Prostate gland (tissue), 2 donors: ENCODE measurements at regions of chr16 and their contacts with region 1.

Region 1: DNA sequence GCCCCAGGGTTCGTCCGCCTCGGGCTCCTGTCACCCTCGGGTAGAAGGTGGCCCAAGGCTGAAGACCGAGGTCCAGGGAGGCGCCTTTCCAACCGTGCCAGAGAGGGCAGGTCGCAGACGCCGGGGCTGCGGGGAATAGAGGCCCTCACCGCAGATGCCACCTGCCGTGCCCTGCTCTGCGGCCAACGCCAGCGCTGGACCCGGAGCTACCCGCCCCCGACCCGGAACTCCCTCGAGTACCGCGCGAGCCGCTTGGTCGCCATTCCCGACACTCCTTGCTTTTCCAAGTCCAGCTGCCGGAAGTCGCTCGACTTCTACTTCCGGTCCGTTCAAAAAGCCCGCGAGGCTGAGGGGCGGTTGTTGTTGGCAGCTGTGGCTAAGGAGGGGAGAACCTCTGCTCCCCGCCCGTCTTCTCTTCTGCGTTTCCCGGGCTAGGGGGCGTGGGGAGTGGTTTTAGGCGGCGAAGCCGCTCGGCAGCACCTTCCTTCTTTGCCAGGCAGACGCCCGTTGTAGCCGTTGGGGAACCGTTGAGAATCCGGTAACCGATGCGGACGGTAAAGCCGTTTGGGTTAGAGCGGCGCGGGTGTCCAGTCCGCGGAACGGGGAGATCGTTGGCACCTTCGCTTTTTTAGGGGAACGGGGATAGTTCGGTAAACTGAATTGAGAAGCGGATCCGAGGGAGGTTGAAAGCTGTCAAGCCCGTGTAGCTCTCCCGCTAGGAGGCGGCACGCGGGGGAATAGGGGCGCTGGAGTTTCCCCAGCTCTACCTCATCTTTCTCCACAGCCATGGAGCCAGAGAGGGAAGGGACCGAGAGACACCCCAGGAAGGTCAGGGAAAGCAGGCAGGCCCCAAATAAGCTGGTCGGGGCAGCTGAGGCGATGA is at the starts of genes ERI2 and REXO5:
- DNase-seq: peak; percentile 90
- H3K4me3 ChIP-seq: peak within 1 kb of the TSS; percentile 63 to 69
- H3K27ac ChIP-seq: peak within 1 kb of the TSS; percentile 95 to 96
- H3K4me1 ChIP-seq: peaks cover 9% of the 10 kb centered on the region
- H3K27me3 ChIP-seq: no peaks in the 10 kb centered on the region
- CTCF ChIP-seq: peak; percentile 34 to 43 (median 38)
- POLR2A ChIP-seq: peak; percentile 78
- total RNA-seq, gene ERI2: 31.6 to 35.2 TPM
- total RNA-seq, gene REXO5: 12.1 to 67.1 TPM

Region 2: DNA sequence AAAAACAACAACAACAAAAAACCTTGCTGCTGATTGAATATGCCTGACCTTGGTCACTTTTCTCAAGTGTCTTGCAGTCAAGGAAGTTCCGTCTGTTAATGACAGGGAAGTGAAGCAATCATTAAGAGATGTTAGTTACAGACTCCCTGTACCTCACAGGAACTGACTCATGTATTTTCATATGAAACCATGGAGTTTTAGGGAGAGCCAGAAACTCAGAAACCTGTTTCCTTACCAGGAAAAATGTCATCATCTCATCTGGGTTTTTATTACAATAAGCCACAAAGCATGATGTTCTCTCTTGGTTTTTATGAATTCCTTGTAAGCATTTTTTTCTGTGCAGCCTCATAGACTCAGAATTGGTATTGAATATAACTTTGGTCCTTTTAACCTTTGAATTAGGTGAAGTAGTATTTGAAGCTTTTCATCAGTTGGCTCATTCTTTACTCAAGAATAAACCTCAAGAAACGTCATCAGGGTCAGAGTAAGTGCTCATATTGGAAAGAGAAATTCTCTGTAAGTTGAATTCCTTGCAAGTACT is 104.4 kb after region 1 on chr16:
- intact Hi-C with region 1: loop called (anchors 10 kb)
- DNase-seq: no peak
- H3K4me3 ChIP-seq: no peak overlapping the region
- H3K27ac ChIP-seq: no peak overlapping the region
- H3K4me1 ChIP-seq: peaks cover 6% of the 10 kb centered on the region
- H3K27me3 ChIP-seq: no peaks in the 10 kb centered on the region
- CTCF ChIP-seq: no peak
- POLR2A ChIP-seq: no peak

Region 3: DNA sequence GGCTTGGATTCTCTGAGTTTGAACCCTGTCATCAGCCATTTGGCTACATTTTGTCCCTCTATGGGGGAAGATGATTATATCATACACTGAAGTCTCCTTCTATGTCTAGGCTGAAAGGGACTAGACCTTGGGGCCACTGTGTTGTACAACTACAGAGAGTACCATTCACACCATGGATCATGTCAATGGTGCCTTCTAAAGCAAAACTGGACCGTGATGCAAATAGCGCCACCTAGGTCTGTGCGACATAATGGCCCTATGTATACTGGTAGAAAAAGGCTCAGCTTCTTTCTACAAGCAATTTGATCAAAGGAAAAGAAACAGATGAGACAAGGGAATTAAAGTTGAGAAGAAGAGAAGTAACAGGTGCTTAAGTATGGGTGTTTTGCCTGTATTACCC is 194.9 kb after region 1 on chr16:
- intact Hi-C with region 1: no loop called
- DNase-seq: no peak
- H3K4me3 ChIP-seq: no peak overlapping the region
- H3K27ac ChIP-seq: no peak overlapping the region
- H3K4me1 ChIP-seq: no peaks in the 10 kb centered on the region
- H3K27me3 ChIP-seq: no peaks in the 10 kb centered on the region
- CTCF ChIP-seq: no peak
- POLR2A ChIP-seq: no peak

Region 4: DNA sequence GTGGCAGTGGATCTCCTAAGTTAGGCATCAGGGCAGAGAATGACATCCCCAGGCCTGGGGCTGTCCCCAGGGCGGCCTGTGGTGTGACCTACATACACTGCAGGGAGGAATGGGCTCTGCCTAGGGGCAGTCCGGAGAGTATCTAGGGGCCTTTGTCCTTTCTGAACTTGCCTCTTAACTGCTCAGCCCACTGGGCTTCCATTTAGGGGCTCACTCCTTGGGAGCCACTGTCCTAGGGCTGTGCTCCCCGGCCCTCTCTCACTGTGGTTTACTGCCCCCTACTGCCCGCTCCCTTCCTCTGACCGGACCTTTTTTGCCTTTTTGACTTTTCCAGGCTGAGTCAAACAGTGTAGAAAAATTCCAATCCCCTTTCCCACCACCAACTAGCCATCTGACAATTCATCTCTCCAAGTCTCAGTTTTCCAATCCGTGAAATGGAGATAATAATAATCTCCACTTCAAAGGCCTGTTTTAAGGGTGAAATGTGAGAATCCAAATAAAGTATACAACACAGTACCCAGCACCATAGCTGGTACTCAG is 277.4 kb after region 1 on chr16:
- intact Hi-C with region 1: loop called (anchors 10 kb)
- DNase-seq: peak; percentile 37
- H3K4me3 ChIP-seq: no peak overlapping the region
- H3K27ac ChIP-seq: no peak overlapping the region
- H3K4me1 ChIP-seq: no peaks in the 10 kb centered on the region
- H3K27me3 ChIP-seq: no peaks in the 10 kb centered on the region
- CTCF ChIP-seq: peak in 3 of 4 experiments; percentile 69 to 70 (median 69)
- POLR2A ChIP-seq: no peak